ENCODE measurements at regions of chr10 and their contacts with region 1.

Region 1: DNA sequence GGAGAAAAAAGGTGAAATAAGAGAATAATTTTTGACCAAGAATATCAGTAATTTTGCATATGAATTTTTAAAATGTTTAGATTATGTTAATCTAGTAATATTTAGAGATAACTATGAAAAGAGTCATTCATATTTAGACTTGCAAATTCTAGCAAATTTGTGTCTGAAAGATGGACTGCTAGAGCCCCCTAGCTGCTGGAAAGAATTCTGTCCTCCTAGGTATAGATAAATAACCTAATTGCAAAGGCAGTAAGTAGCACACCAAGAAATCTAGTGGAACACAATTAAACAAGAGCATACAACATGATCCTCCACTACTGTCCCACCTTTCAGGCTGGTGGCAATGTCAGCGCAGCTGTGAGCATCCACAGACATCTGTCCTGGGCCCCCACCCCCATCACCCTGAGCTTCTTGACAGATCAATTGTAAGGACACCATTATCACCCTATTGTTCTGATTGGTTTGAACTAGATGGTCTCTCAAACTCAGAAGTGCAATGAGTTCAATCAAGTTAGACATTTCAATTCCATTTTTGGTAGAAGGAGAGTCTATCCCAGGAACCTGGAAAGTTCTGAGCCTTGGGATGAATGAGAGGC is 15.0 kb upstream of the GFRA1 start:
- DNase-seq: peak; percentile 22
- H3K4me3 ChIP-seq: no peak overlapping the region
- H3K27ac ChIP-seq: no peak overlapping the region
- H3K4me1 ChIP-seq: no peaks in the 10 kb centered on the region
- H3K27me3 ChIP-seq: no peaks in the 10 kb centered on the region
- CTCF ChIP-seq: peak; percentile 48 to 64 (median 53)
- EP300 ChIP-seq: no peak
- POLR2A ChIP-seq: no peak

Region 2: DNA sequence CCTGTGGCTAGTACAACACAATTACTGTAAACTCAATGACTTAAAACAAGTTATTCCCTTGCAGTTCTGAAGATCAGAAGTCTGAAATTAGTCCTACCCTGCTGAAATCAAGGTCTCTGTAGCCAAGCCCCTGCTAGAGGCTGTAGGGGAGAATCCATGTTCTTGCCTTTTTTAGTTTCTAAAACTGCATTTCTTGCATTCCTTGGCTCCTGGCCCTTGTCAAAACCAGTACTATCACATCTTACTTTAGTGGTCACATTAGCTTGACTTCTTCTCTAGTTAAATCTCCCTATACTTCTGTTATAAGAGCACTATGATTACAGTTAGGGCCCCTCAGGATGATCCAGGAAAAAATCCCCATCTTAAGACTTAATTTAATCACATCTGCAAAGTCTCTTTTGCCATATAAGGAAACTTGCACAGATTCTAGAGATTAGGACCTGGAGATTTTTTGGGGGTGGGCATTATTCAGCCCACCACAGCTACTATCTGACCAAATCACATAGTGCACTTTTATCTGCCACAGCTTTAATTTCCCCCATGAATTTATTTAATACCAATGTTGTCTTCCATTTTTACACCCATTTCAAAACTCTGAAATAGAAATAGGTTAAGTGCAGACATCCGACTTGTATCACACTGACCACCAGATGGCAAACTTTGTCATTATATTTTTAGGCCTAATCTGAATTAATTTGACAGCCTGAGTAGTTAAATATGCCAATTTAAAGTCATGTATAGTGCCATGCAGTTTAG is 581.8 kb before region 1 on chr10:
- in situ Hi-C with region 1: loop called in 1 of 4 experiments (anchors 25 kb)
- intact Hi-C with region 1: no loop called
- DNase-seq: no peak
- H3K4me3 ChIP-seq: no peak overlapping the region
- H3K27ac ChIP-seq: no peak overlapping the region
- H3K4me1 ChIP-seq: no peaks in the 10 kb centered on the region
- H3K27me3 ChIP-seq: no peaks in the 10 kb centered on the region
- CTCF ChIP-seq: peak in 4 of 5 experiments; percentile 17 to 42 (median 29)
- EP300 ChIP-seq: no peak
- POLR2A ChIP-seq: no peak

Region 3: DNA sequence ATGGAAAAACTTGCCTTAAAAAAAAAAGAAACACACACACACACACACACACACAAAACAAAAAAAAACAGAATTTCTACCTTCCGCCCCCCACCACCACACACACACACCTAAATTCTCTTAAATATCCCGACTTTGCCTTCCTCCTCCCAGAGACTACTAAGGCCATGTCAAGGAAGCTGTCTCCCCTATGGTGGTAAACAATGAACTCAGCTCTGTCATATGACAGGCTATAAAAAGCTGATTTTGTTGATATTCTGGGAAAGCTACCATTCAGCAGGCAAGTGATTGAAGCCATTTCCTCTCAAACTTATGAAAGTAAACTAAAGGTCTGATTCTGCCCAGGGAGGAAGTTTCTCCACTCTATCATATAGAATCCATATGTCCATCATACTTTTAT is 486.0 kb before region 1 on chr10:
- in situ Hi-C with region 1: loop called in 2 of 4 experiments (anchors 25 kb)
- intact Hi-C with region 1: loop called (anchors 5 kb)
- DNase-seq: no peak
- H3K4me3 ChIP-seq: no peak overlapping the region
- H3K27ac ChIP-seq: no peak overlapping the region
- H3K4me1 ChIP-seq: peaks cover 0 to 4% (median 0%) of the 10 kb centered on the region in 4 donors
- H3K27me3 ChIP-seq: no peaks in the 10 kb centered on the region
- CTCF ChIP-seq: no peak
- EP300 ChIP-seq: no peak
- POLR2A ChIP-seq: no peak

Region 4: GRCh38 chr10:115818012-115818411 is 470.0 kb before region 1 on chr10:
- in situ Hi-C with region 1: loop called in 2 of 4 experiments (anchors 25 kb)
- intact Hi-C with region 1: no loop called
- DNase-seq: no peak
- H3K4me3 ChIP-seq: peak overlapping the region in 1 of 4 donors; percentile 13
- H3K27ac ChIP-seq: no peak overlapping the region
- H3K4me1 ChIP-seq: peaks cover 0 to 13% (median 3%) of the 10 kb centered on the region in 4 donors
- H3K27me3 ChIP-seq: no peaks in the 10 kb centered on the region
- CTCF ChIP-seq: no peak
- EP300 ChIP-seq: no peak
- POLR2A ChIP-seq: no peak

Region 5: GRCh38 chr10:116371737-116372136 is 83.7 kb after region 1 on chr10:
- in situ Hi-C with region 1: no loop called
- intact Hi-C with region 1: no loop called
- DNase-seq: no peak
- H3K4me3 ChIP-seq: no peak overlapping the region
- H3K27ac ChIP-seq: no peak overlapping the region
- H3K4me1 ChIP-seq: no peaks in the 10 kb centered on the region
- H3K27me3 ChIP-seq: no peaks in the 10 kb centered on the region
- CTCF ChIP-seq: no peak
- EP300 ChIP-seq: no peak
- POLR2A ChIP-seq: no peak

Region 6: DNA sequence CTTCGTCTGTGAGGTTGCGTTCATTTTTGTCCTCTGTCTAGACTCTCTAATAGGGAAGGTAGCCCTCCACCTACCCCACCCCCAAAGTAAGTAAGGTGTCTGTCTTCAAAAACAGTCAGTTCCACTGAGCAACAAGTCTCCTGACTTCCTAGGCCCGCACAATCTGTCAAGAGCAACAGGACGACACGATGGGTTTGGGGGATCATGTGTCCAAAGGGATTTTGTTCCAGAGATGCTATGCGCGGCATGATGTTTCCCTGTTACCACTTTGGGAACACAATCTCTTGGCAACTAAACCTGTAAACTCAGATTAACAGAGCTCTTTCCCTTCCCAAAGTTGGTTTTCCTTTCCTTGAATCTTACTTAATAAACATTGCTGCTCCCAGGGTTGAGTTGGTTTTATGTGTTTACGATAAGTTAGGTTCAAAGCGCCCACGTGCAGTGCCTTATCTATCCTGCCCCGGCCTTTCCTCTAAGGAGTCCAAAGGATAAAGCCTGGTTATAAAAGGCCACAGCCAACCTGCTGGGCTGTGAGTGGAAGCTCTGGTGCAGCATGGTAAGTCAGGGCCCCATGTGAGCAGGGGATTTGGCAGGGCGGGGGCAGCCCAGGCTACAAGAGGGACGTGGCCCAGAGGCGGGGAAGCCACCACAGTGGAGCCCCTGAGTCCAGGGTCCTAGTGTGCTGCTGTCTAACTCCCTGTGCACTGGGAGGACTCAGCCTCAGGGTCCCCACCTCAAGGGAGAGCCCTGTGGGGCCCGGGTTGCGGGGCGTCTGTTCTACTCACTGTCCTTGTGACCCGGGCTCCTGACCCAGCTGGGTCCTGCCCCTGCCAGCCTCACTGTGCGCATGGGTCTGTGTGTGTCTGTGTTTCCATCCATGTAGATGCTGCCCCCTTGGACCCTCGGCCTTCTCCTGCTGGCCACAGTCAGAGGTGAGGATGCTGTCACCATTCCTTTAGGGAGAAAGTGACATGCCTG is 332.7 kb after region 1 on chr10 and contains the start of gene PNLIPRP2:
- in situ Hi-C with region 1: no loop called
- intact Hi-C with region 1: no loop called
- DNase-seq: peak; percentile 79
- H3K4me3 ChIP-seq: no peak within 1 kb of the TSS
- H3K27ac ChIP-seq: peak within 1 kb of the TSS; percentile 75 to 84 (median 78)
- H3K4me1 ChIP-seq: peaks cover 0 to 16% (median 13%) of the 10 kb centered on the region in 4 donors
- H3K27me3 ChIP-seq: no peaks in the 10 kb centered on the region
- CTCF ChIP-seq: no peak
- EP300 ChIP-seq: no peak
- POLR2A ChIP-seq: no peak
- total RNA-seq, gene PNLIPRP2: 0.32 to 4.2 TPM in 2 of 4 donors, not detected in the others